ENCODE measurements at regions of chr5 and their contacts with region 1.

Region 1: DNA sequence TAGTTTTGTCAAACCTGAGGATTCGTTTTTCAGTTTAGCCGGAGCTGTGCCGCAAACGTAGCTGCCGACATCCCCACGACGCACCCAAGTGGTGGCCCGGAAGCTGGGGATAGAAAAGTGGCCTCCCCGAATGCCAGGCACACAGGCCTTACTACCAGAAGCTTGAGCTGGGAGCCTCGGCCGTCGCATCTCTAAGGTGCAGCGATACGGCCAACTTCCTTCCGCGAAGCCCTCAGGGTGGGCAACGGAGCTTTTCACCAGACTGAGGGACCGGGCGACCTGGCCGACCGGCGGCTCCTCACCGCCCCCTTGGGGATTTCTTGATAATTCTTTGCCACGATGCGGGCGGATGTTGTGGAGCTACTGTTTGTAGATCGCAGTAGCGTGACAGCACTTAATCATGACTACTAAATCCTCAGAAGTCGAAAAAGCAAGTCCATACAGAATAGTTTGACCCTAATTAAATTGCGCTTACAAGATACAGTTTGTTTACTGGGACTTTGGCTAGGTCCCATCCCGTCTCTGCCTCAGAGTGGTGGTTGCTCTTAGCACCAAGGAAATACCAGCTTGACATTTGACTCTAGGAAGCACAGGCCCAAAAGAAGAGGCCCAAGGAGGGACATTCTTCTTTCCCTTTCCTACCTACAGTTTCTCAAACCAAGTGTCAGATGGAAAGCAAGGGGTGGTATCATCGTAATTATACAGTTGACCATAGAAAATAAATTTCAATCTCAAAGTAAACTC is 613 bp upstream of the TMEM267 start:
- DNase-seq: peak; percentile 80

Region 2: GRCh38 chr5:43040287-43041098 is 443.8 kb before region 1 on chr5 and contains the start of gene ANXA2R:
- CTCF ChIA-PET with region 1: no interaction called
- POLR2A ChIA-PET with region 1: interaction called, 12 read pairs
- DNase-seq: peak; percentile 45

Region 3: GRCh38 chr5:43120720-43121564 is 363.3 kb before region 1 on chr5 and contains the start of gene ZNF131:
- CTCF ChIA-PET with region 1: no interaction called
- POLR2A ChIA-PET with region 1: interaction called, 22 read pairs
- DNase-seq: peak; percentile 93

Region 4: GRCh38 chr5:43389679-43390329 is 94.5 kb before region 1 on chr5:
- CTCF ChIA-PET with region 1: interaction called, 16 read pairs
- POLR2A ChIA-PET with region 1: interaction called, 14 read pairs
- DNase-seq: peak; percentile 72

Region 5: GRCh38 chr5:43422143-43422542 is 62.1 kb before region 1 on chr5:
- CTCF ChIA-PET with region 1: no interaction called
- POLR2A ChIA-PET with region 1: interaction called, 11 read pairs
- DNase-seq: no peak

Region 6: GRCh38 chr5:43514816-43515677 is 30.8 kb after region 1 on chr5 and contains the start of gene C5orf34:
- CTCF ChIA-PET with region 1: interaction called, 3 read pairs
- POLR2A ChIA-PET with region 1: interaction called, 47 read pairs
- DNase-seq: peak; percentile 97

Region 7: GRCh38 chr5:43602461-43603343 is 118.4 kb after region 1 on chr5 and contains the start of gene NNT:
- CTCF ChIA-PET with region 1: interaction called, 4 read pairs
- POLR2A ChIA-PET with region 1: interaction called, 13 read pairs
- DNase-seq: peak; percentile 63